Stomach (tissue), 19 donors: ENCODE measurements at regions of chr11 and their contacts with region 1.

Region 1: DNA sequence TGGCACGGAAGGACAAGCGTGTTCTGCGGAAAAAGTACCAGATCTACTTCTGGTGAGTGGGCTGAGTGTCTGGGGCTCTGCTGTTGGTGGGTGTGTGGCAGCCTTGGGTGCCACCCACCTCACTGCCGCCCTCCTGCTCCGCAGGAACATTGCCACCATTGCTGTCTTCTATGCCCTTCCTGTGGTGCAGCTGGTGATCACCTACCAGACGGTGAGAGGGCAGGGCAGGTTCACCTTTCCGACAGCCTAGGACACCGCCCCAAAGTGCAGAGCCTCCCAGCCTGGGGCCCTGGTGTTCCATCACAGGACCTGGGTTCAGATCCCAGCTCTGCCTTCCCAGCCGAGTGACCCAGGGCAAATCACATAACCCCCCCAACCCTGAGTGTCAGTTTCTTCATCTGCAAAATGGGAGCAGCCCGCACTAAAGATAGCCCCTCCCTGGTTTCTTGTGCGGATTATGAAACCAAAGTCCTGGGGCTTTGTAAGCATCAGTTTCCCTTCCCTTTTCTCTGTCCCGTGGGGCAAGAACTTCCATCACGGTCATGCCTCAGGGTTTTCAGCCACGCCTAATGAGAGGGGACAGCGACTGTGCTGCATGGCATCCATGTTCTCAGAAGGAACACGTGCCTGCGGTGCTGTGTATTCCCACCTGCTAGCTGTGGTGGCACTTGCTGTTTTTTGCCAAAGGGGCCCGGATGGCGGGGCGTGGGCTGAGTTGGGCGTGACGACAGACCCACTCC is 9.8 kb upstream of the TAGLN start:
- DNase-seq: peak; percentile 24 to 44
- H3K4me3 ChIP-seq: no peak overlapping the region
- H3K27ac ChIP-seq: peak overlapping the region in 3 of 5 donors; percentile 32 to 60 (median 38)
- H3K4me1 ChIP-seq: peaks cover 18 to 68% (median 38%) of the 10 kb centered on the region in 4 donors
- H3K27me3 ChIP-seq: no peaks in the 10 kb centered on the region
- CTCF ChIP-seq: no peak
- EP300 ChIP-seq: no peak
- POLR2A ChIP-seq: no peak

Region 2: GRCh38 chr11:117226388-117227385 is 37.3 kb after region 1 on chr11:
- intact Hi-C with region 1: loop called (anchors 5 kb)
- DNase-seq: peak; percentile 53 to 92
- H3K4me3 ChIP-seq: no peak overlapping the region
- H3K27ac ChIP-seq: peak overlapping the region in 2 of 5 donors; percentile 27 to 51
- H3K4me1 ChIP-seq: peaks cover 40 to 81% (median 66%) of the 10 kb centered on the region in 4 donors
- H3K27me3 ChIP-seq: no peaks in the 10 kb centered on the region
- CTCF ChIP-seq: peak in 5 of 7 experiments; percentile 57 to 89 (median 80)
- EP300 ChIP-seq: no peak
- POLR2A ChIP-seq: no peak